GM12878 (cell line): ENCODE measurements at regions of chr15 and their contacts with region 1.

Region 1: GRCh38 chr15:41180206-41180789 is 50.3 kb downstream of the EXD1 start:
- DNase-seq: no peak
- ATAC-seq: no peak
- H3K4me3 ChIP-seq: no peak overlapping the region
- H3K27ac ChIP-seq: no peak overlapping the region
- H3K4me1 ChIP-seq: no peaks in the 10 kb centered on the region
- H3K27me3 ChIP-seq: no peaks in the 10 kb centered on the region; a peak in 1 of 4 replicates
- CTCF ChIP-seq: no peak
- EP300 ChIP-seq: no peak
- POLR2A ChIP-seq: no peak
- RAD21 ChIP-seq: no peak

Region 2: DNA sequence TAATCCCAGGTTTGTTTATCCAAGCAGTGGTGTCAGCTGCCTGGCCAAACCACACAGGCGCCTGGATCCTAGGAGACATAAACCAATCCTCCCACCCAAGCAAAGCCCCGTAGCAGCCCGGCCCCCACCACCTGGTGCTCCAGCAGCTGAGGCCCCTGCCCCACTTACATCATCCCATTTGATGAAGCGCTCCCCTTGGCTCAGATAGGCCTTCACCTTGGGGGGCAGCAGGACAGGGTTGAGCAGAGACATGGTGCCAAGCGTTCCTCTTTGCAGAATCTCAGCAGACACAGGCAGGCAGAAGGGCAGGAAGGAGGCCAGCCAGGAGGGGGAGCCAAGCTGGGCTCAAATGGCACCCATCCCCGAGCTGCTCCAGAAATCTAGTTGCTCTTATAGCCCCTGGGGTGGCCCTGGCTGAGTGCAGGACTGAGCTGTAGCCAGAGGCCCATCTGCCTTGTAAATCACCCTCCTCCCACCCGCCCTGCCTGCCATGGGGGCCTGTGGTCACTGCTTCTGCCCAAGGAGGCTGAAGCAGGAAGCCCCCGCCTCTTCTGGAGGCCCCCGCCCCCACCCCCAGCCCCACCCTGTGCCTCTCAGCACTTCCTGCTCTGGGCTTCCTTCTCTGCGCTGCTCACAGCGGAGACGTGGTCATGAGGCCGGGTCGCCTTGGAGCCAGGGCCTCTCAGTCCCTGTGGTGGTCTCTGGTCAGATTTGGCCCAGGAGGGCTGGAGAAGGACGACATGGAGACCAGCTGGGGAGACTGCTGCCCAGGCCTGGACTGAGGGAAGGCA is 872.7 kb before region 1 on chr15 and contains the start of gene PLCB2:
- CTCF ChIA-PET with region 1: no interaction called
- POLR2A ChIA-PET with region 1: no interaction called
- RAD21 ChIA-PET with region 1: no interaction called
- SMC1A ChIA-PET with region 1: no interaction called
- in situ Hi-C with region 1: no loop called
- intact Hi-C with region 1: no loop called
- DNase-seq: peak; percentile 16
- ATAC-seq: peak; percentile 78
- H3K4me3 ChIP-seq: peak within 1 kb of the TSS; percentile 80
- H3K27ac ChIP-seq: peak within 1 kb of the TSS; percentile 78
- H3K4me1 ChIP-seq: peaks cover 12% of the 10 kb centered on the region
- H3K27me3 ChIP-seq: peaks cover 0 to 1% of the 10 kb centered on the region in 2 experiments; a peak in 1 of 4 replicates
- CTCF ChIP-seq: peak; percentile 27 to 46 (median 39); a peak in 5 of 6 replicates
- EP300 ChIP-seq: no peak
- POLR2A ChIP-seq: peak; percentile 87
- RAD21 ChIP-seq: no peak
- polyA plus RNA-seq, gene PLCB2: 1.3 to 2.4 TPM

Region 3: DNA sequence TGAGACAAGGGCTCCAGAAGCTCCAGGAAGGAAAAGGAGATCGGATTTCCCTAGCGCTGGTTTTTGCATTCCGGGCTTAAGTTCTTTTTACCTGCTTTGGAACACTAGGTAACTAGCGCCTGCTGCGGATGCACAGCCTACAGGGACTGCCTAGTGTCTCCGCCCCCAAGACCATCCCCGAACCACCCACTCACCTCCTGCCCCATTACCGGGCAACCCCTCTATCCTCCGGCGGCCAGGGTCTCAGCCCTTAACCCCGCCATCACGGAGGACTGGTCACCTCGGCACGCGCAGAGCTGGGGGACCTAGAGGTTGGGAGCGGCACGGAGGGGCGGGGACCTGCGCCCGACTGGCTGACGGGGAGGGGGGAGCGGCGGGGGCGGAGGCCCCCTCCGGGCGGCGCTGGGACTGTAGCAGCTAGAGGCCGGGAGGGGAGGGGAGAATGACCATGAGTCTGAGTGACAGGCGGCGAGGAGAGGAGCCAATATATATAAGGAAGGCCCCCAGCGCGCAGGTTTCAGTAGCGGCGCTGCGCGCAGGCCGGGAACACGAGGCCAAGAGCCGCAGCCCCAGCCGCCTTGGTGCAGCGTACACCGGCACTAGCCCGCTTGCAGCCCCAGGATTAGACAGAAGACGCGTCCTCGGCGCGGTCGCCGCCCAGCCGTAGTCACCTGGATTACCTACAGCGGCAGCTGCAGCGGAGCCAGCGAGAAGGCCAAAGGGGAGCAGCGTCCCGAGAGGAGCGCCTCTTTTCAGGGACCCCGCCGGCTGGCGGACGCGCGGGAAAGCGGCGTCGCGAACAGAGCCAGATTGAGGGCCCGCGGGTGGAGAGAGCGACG is 251.3 kb before region 1 on chr15 and contains the start of gene DLL4:
- CTCF ChIA-PET with region 1: interaction called, 17 read pairs
- POLR2A ChIA-PET with region 1: no interaction called
- RAD21 ChIA-PET with region 1: interaction called, 3 read pairs
- SMC1A ChIA-PET with region 1: interaction called, 4 read pairs
- in situ Hi-C with region 1: no loop called
- intact Hi-C with region 1: no loop called
- DNase-seq: no peak
- ATAC-seq: peak; percentile 54
- H3K4me3 ChIP-seq: peak within 1 kb of the TSS; percentile 64
- H3K27ac ChIP-seq: no peak within 1 kb of the TSS
- H3K4me1 ChIP-seq: peaks cover 33% of the 10 kb centered on the region
- H3K27me3 ChIP-seq: peaks cover 22 to 31% of the 10 kb centered on the region in 2 experiments
- CTCF ChIP-seq: no peak
- EP300 ChIP-seq: no peak
- POLR2A ChIP-seq: peak; percentile 78
- RAD21 ChIP-seq: no peak
- polyA plus RNA-seq, gene DLL4: not detected

Region 4: GRCh38 chr15:41241221-41241964 is 61.1 kb after region 1 on chr15:
- CTCF ChIA-PET with region 1: no interaction called
- POLR2A ChIA-PET with region 1: no interaction called
- RAD21 ChIA-PET with region 1: no interaction called
- SMC1A ChIA-PET with region 1: no interaction called
- in situ Hi-C with region 1: loop called (anchors 5 kb)
- intact Hi-C with region 1: no loop called
- DNase-seq: no peak
- ATAC-seq: no peak
- H3K4me3 ChIP-seq: no peak overlapping the region
- H3K27ac ChIP-seq: no peak overlapping the region
- H3K4me1 ChIP-seq: no peaks in the 10 kb centered on the region
- H3K27me3 ChIP-seq: no peaks in the 10 kb centered on the region
- CTCF ChIP-seq: no peak
- EP300 ChIP-seq: no peak
- POLR2A ChIP-seq: no peak
- RAD21 ChIP-seq: no peak